ENCODE measurements at regions of chr1 and their contacts with region 1.

Region 1: DNA sequence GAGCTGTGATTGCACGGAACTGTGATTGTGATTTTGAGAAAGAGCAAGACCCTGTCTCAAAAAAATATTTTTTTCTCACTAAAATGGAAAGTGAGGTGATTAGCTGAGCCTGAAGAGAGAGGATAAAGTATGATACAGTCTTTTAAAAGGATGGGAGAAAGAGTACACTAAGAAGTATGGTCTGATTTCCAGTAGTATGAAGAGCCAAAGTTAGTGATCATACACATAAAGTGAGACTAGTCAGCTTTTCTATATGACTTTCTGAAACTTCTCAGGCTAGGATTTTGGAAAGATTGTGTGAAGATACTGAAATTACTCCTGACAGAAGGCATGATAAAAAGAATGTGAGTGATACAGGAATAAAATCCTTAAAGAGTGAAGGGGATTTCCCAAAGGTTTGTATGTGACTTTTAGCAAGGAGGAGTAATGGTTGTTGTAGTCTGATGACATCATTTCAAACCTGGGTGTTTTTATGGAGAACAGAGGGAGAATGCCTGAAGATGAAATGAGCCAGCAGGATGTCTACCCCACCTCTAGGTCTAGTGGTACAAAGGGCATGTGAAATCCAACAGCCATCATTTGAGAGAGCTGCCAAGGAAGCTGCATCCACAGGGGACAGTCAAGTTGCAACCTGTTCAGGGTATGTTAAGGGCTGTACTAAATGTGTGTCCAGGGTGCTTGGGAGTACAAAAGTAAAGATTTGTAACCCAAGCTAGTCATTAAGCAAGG is 157.7 kb downstream of the PIK3R3 start:
- DNase-seq: peak; percentile 8
- ATAC-seq: peak; percentile 79
- H3K4me3 Mint-ChIP-seq: no peak overlapping the region
- H3K27ac Mint-ChIP-seq: no peak overlapping the region
- H3K4me1 Mint-ChIP-seq: no peaks in the 10 kb centered on the region
- H3K27me3 Mint-ChIP-seq: no peaks in the 10 kb centered on the region

Region 2: DNA sequence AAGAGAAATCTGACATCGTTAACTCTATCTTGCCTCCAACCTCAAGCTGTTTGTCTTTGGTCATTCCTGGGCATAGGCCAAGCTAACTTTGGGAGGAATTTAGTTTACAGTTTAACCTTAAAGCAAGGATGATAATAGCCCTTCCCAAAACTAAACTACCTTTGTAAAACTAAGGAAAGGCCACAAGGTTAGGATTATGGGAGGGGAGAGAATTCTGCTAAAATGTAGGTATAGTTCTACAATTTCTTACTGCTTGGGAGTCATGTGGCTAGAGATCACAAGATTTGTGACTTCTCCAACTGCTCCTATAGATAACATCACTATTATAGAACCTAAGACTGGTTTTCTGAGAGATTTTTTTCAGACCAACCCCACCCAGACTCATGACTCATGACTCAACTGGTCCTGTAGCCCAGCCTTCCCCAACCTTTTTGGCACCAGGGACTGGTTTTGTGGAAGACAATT is 563.8 kb before region 1 on chr1:
- CTCF ChIA-PET with region 1: no interaction called
- POLR2A ChIA-PET with region 1: interaction called, 10 read pairs
- intact Hi-C with region 1: no loop called
- DNase-seq: no peak
- ATAC-seq: no peak
- H3K4me3 Mint-ChIP-seq: no peak overlapping the region
- H3K27ac Mint-ChIP-seq: no peak overlapping the region
- H3K4me1 Mint-ChIP-seq: peaks cover 6% of the 10 kb centered on the region
- H3K27me3 Mint-ChIP-seq: no peaks in the 10 kb centered on the region

Measured in activated CD4-positive, alpha-beta T cell treated with anti-CD3 and anti-CD28 coated beads for 36 hours (primary cell).